Colonic mucosa (tissue), 4 donors: ENCODE measurements at regions of chr6 and their contacts with region 1.

Region 1: DNA sequence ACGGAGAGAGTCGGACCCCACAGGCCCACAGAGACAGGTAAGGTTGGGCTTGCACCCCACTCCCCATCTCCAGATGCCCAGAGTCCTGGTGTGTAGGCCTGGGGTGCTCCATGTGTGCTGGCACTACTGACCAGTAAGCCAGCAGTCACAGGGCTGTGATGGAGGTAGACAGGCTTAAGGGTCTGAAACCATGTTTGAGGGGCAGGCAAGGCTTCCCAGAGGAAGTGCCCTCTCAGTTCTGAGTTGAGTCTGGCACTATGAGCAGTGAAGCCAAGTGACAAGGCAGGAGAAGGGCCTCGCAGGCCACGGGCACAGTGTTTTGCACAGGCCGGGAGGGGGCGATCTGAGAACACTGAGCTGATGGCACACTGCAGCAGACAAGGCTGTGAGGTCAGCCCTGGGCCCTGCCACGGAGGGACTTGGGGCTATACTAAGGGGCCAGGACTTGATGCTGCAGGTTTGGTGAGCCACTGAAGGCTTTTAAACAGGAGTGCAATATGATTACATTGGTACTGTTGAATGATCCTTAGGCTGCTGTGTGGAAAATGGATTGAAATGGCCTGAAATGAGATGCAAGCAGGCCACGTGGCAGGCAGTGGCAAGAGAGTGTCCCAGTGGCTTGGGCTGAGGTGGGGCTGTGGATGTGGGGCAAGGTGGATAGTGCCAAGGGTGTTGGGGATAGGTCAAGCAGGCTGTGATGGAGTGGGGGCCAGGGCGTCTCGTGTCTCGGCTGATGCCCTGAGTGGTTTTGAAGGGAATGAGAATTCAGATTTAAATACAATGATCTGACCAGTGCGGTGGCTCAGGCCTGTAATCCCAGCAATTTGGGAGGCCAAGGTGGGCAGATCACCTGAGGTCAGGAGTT is 20.3 kb downstream of the TTBK1 start:
- DNase-seq: peak; percentile 90
- H3K4me3 ChIP-seq: no peak overlapping the region
- H3K27ac ChIP-seq: no peak overlapping the region
- H3K4me1 ChIP-seq: peaks cover 11% of the 10 kb centered on the region
- H3K27me3 ChIP-seq: no peaks in the 10 kb centered on the region
- CTCF ChIP-seq: peak; percentile 76

Region 2: GRCh38 chr6:43297644-43298564 is 34.4 kb after region 1 on chr6 and contains the start of gene SLC22A7:
- intact Hi-C with region 1: no loop called
- DNase-seq: no peak
- H3K4me3 ChIP-seq: no peak within 1 kb of the TSS
- H3K27ac ChIP-seq: no peak within 1 kb of the TSS
- H3K4me1 ChIP-seq: no peaks in the 10 kb centered on the region
- H3K27me3 ChIP-seq: no peaks in the 10 kb centered on the region
- CTCF ChIP-seq: no peak
- total RNA-seq, gene SLC22A7: not detected

Region 3: DNA sequence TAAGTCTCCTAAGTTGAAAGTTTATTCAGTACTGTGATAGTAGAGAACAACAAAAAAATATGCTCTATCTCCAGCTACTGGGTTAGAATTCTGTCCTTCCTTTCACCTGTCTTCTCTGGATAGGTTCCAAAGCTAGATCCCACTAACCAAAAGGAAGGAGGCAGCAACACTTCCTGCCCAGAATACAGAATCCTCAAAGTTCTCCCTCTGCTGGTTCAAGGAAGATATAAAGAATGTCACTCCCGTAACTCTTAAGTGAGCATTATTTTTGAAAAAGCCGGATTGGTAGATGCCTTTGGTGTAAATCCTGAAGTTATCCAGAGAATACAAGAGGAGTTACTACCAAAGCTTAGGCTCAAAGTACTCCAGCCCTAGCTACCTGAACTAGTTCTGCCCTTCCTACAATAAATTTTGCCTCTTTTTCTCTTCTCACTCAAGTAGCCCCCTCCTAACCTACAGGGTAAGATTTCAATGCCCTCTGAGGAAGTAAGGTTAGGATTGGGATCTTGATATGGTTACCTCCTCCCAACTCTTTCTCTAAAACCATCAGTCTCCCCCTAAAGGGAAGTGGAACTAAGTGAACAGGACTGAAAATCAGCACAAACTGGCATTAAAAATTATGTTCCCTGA is 71.0 kb after region 1 on chr6:
- intact Hi-C with region 1: loop called (anchors 2 kb)
- DNase-seq: peak; percentile 32
- H3K4me3 ChIP-seq: no peak overlapping the region
- H3K27ac ChIP-seq: peak overlapping the region; percentile 45
- H3K4me1 ChIP-seq: no peaks in the 10 kb centered on the region
- H3K27me3 ChIP-seq: no peaks in the 10 kb centered on the region
- CTCF ChIP-seq: peak; percentile 26

Region 4: DNA sequence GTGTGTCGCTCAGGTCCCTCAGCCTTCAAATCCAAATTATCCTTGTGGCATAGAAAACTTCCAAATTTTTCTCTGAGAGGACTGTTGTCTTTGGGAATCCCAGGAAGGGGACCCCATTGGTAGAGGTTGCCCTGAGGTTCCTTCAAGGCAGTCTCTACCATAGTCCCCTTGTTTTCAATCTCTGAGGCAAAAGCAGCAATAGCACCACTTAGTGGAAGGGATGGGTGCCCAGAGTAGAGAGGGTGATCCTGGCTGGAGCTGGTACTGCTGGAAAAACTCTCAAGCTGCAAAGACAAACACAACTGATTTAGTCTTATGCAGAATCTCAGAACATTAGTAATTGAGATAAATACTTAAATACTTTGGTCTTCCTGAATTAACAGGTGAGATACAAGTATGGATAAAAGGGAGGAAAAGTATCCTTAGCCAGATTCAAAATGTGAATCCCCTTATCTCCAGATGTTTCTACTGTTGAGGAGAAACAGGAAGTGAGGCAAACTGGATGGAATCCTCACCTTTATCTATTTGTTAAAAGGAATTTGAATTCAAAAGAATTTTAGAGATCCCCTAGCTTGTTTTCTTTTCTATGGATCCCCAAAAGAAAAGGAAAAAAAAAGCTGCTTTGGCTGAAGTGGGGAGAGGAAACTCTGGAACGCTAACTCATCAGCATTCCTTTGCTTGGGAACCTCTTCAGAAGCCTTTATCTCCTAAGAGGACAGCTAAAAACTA is 92.5 kb after region 1 on chr6:
- intact Hi-C with region 1: loop called (anchors 5 kb)
- DNase-seq: no peak
- H3K4me3 ChIP-seq: no peak overlapping the region
- H3K27ac ChIP-seq: no peak overlapping the region
- H3K4me1 ChIP-seq: no peaks in the 10 kb centered on the region
- H3K27me3 ChIP-seq: no peaks in the 10 kb centered on the region
- CTCF ChIP-seq: peak; percentile 32

Region 5: GRCh38 chr6:43506667-43507471 is 243.3 kb after region 1 on chr6:
- intact Hi-C with region 1: loop called (anchors 10 kb)
- DNase-seq: peak; percentile 87
- H3K4me3 ChIP-seq: no peak overlapping the region
- H3K27ac ChIP-seq: no peak overlapping the region
- H3K4me1 ChIP-seq: no peaks in the 10 kb centered on the region
- H3K27me3 ChIP-seq: no peaks in the 10 kb centered on the region
- CTCF ChIP-seq: peak; percentile 95

Region 6: GRCh38 chr6:43584892-43585570 is 321.5 kb after region 1 on chr6:
- intact Hi-C with region 1: no loop called
- DNase-seq: no peak
- H3K4me3 ChIP-seq: no peak overlapping the region
- H3K27ac ChIP-seq: no peak overlapping the region
- H3K4me1 ChIP-seq: no peaks in the 10 kb centered on the region
- H3K27me3 ChIP-seq: no peaks in the 10 kb centered on the region
- CTCF ChIP-seq: no peak